MCF 10A (cell line): ENCODE measurements at regions of chr5 and their contacts with region 1.

Region 1: GRCh38 chr5:42583322-42583721 is 160.1 kb downstream of the GHR start:
- DNase-seq: peak; percentile 88
- H3K4me3 Mint-ChIP-seq: no peak overlapping the region
- H3K27ac Mint-ChIP-seq: no peak overlapping the region
- H3K4me1 Mint-ChIP-seq: peaks cover 26% of the 10 kb centered on the region
- H3K27me3 Mint-ChIP-seq: no peaks in the 10 kb centered on the region
- CTCF ChIP-seq: peak; percentile 72

Region 2: GRCh38 chr5:41903892-41904799 is 679.2 kb before region 1 on chr5 and contains the start of gene RIMOC1:
- CTCF ChIA-PET with region 1: no interaction called
- POLR2A ChIA-PET with region 1: interaction called, 10 read pairs
- intact Hi-C with region 1: no loop called
- DNase-seq: peak; percentile 99
- H3K4me3 Mint-ChIP-seq: peak within 1 kb of the TSS; percentile 97
- H3K27ac Mint-ChIP-seq: peak within 1 kb of the TSS; percentile 100
- H3K4me1 Mint-ChIP-seq: peaks cover 36% of the 10 kb centered on the region
- H3K27me3 Mint-ChIP-seq: no peaks in the 10 kb centered on the region
- CTCF ChIP-seq: no peak
- total RNA-seq, gene RIMOC1: 40.4 and 45.4 TPM in 2 replicates

Region 3: GRCh38 chr5:42423285-42424165 is 159.8 kb before region 1 on chr5 and contains the start of gene GHR:
- CTCF ChIA-PET with region 1: interaction called, 113 read pairs
- POLR2A ChIA-PET with region 1: interaction called, 62 read pairs
- intact Hi-C with region 1: loop called (anchors 1 kb)
- DNase-seq: peak; percentile 93
- H3K4me3 Mint-ChIP-seq: no peak within 1 kb of the TSS
- H3K27ac Mint-ChIP-seq: no peak within 1 kb of the TSS
- H3K4me1 Mint-ChIP-seq: no peaks in the 10 kb centered on the region
- H3K27me3 Mint-ChIP-seq: no peaks in the 10 kb centered on the region
- CTCF ChIP-seq: peak; percentile 69
- total RNA-seq, gene GHR: 1.8 and 1.9 TPM in 2 replicates

Region 4: GRCh38 chr5:42561656-42562055 is 21.7 kb before region 1 on chr5:
- CTCF ChIA-PET with region 1: interaction called, 17 read pairs
- POLR2A ChIA-PET with region 1: interaction called, 8 read pairs
- intact Hi-C with region 1: no loop called
- DNase-seq: no peak
- H3K4me3 Mint-ChIP-seq: no peak overlapping the region
- H3K27ac Mint-ChIP-seq: no peak overlapping the region
- H3K4me1 Mint-ChIP-seq: no peaks in the 10 kb centered on the region
- H3K27me3 Mint-ChIP-seq: no peaks in the 10 kb centered on the region
- CTCF ChIP-seq: no peak

Region 5: DNA sequence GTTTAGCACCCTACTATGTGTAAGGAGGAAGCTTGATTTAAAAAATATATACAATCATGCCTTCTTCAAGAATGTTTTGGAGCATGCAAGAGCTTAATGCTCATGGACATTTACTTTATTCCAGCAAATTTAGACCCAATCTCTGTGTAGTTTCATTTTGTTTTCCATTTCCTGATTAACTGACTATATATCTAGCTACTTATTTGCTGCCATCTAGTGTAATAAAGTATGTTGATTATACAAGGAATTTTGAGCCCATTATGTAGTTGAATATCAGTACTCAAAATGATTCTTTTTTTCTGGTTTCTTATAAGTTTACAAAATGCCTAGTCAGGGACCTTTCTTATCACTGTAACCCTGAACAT is 73.3 kb after region 1 on chr5:
- CTCF ChIA-PET with region 1: interaction called, 47 read pairs
- POLR2A ChIA-PET with region 1: interaction called, 22 read pairs
- intact Hi-C with region 1: no loop called
- DNase-seq: peak; percentile 18
- H3K4me3 Mint-ChIP-seq: peak overlapping the region; percentile 66
- H3K27ac Mint-ChIP-seq: peak overlapping the region; percentile 25
- H3K4me1 Mint-ChIP-seq: peaks cover 15% of the 10 kb centered on the region
- H3K27me3 Mint-ChIP-seq: no peaks in the 10 kb centered on the region
- CTCF ChIP-seq: peak; percentile 16

Region 6: DNA sequence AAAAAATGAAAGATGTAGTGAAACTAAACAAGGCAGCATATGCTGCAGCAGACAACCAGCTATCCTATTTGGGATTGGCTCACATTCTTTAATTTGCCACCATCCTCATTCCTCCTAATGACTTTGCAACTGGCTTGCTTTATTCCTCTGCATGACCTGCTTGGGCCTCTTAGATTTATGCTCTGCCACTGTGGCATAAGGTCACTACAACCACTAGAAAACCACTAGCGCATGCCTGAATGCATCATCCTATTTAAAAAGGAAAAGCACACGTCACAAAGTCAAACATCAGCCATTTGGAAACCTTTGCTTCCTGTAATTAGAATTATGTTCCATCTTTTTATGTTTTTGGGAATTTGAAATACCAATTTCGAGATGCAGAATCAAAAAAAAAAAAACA is 132.5 kb after region 1 on chr5:
- CTCF ChIA-PET with region 1: no interaction called
- POLR2A ChIA-PET with region 1: no interaction called
- intact Hi-C with region 1: no loop called
- DNase-seq: no peak
- H3K4me3 Mint-ChIP-seq: no peak overlapping the region
- H3K27ac Mint-ChIP-seq: no peak overlapping the region
- H3K4me1 Mint-ChIP-seq: peaks cover 4% of the 10 kb centered on the region
- H3K27me3 Mint-ChIP-seq: no peaks in the 10 kb centered on the region
- CTCF ChIP-seq: no peak